ENCODE measurements at regions of chr4 and their contacts with region 1.

Region 1: DNA sequence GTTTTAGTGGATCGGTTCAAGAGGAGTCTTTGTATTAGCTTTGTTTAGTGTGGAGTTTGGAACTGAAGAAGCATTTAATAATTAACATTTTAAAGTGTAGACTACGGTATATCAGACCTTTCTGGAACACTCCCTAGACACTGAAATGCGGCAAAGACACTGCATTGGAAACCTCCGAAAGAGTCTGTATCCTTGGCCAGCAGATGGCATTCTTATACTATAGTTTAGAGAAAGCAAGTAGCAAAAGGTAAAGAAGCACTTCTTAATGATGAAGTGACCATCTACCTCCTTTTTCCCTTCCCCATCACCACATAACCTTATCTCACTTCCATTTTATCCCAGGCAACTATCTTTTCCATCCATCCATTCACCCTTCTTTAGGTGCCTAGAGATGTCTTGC is 7.6 kb downstream of the FABP2 start:
- DNase-seq: peak; percentile 57
- H3K4me3 ChIP-seq: no peak overlapping the region
- H3K27ac ChIP-seq: no peak overlapping the region
- H3K4me1 ChIP-seq: no peaks in the 10 kb centered on the region
- CTCF ChIP-seq: peak; percentile 78

Region 2: GRCh38 chr4:119010909-119011606 is 303.3 kb before region 1 on chr4:
- CTCF ChIA-PET with region 1: no interaction called
- POLR2A ChIA-PET with region 1: no interaction called
- intact Hi-C with region 1: no loop called
- DNase-seq: no peak
- H3K4me3 ChIP-seq: no peak overlapping the region
- H3K27ac ChIP-seq: no peak overlapping the region
- H3K4me1 ChIP-seq: no peaks in the 10 kb centered on the region
- CTCF ChIP-seq: no peak

Region 3: GRCh38 chr4:119490335-119490734 is 176.0 kb after region 1 on chr4:
- CTCF ChIA-PET with region 1: no interaction called
- POLR2A ChIA-PET with region 1: no interaction called
- intact Hi-C with region 1: loop called (anchors 5 kb)
- DNase-seq: peak; percentile 32
- H3K4me3 ChIP-seq: no peak overlapping the region
- H3K27ac ChIP-seq: no peak overlapping the region
- H3K4me1 ChIP-seq: no peaks in the 10 kb centered on the region
- CTCF ChIP-seq: peak; percentile 58

Region 4: DNA sequence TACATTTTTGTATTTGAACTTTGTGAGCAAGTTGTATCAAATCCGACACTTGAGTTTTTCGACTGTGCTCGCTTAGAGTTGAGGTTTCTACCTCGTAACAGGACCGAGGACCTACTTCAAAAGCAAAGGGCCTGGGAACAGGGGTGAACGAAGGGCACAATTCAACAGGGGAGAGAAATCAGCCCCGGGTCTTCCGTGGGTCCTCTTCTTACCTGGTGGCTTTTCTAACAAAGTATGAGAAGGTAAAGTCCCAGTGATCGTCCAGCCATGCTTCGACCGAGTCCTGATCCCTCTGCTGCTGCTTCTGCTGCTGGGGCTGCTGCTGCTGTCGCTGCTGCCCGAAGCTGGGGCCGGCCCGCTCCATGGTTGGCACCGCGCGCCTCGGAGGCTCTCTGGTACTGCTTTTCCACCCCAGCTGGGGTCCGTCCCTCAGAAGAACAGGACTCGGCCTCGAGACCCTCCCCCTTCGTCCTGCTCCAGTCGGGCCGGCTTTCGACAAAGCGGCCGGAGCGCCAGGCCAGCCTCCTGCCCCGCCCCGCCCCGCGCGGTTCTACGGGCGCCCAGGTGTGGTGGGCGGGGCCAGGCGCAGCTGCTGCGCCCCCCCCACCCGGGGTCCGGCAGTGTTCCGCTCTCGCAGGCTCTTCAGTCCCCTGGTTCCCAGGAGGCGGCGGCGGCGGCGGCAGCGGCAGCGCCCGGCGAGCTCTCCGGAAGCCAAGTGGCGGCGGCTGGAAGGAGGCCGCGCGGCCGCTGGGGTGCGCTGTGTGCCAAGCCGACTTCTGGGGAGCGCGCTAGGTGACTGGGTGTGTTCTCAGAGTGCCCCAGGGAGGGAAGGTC is 314.2 kb after region 1 on chr4 and contains the start of gene PDE5A:
- CTCF ChIA-PET with region 1: no interaction called
- POLR2A ChIA-PET with region 1: no interaction called
- intact Hi-C with region 1: loop called (anchors 2 kb)
- DNase-seq: peak; percentile 68
- H3K4me3 ChIP-seq: peak within 1 kb of the TSS; percentile 62
- H3K27ac ChIP-seq: no peak within 1 kb of the TSS
- H3K4me1 ChIP-seq: peaks cover 13% of the 10 kb centered on the region
- CTCF ChIP-seq: peak; percentile 70
- total RNA-seq, gene PDE5A: 0.22 and 1.5 TPM in 2 replicates

Region 5: GRCh38 chr4:119785963-119786362 is 471.6 kb after region 1 on chr4:
- CTCF ChIA-PET with region 1: no interaction called
- POLR2A ChIA-PET with region 1: no interaction called
- intact Hi-C with region 1: loop called (anchors 10 kb)
- DNase-seq: no peak
- H3K4me3 ChIP-seq: no peak overlapping the region
- H3K27ac ChIP-seq: no peak overlapping the region
- H3K4me1 ChIP-seq: no peaks in the 10 kb centered on the region
- CTCF ChIP-seq: peak; percentile 57

Region 6: DNA sequence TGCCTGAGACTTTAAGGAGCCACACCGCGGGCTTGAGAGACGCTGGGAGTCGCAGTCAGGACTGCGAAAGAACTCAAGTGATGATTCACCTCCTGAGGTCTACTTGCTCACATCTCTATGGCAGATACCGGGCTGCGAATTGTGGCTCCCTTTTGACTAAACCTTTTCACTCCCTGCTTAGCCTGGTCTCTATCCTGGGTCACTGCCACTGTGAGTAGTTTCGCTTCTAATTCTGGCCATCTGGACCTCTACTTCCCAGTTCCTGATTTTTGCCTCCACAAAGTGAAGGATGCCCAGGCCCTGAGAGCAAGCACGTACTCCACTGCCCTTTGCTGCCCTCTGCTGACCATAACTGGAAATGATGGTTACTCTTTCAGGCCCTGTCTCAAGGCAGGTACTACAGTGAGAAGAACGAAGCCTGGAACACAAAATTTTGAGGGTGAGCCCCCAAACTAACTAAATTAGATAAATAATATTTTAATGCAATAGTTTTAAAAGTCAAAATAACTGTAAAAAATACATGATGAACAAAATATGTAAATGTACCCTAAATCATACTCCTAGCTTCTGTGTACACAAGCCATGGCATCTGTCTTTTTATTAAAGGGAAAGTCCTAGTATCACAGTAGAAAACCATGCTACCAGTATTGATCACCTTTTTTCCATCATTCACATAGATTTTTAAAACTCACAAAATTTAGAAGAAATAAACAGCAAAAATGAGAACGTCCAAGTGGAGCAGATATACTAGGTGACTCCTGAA is 735.6 kb after region 1 on chr4:
- CTCF ChIA-PET with region 1: no interaction called
- POLR2A ChIA-PET with region 1: no interaction called
- intact Hi-C with region 1: loop called (anchors 2 kb)
- DNase-seq: peak; percentile 73
- H3K4me3 ChIP-seq: no peak overlapping the region
- H3K27ac ChIP-seq: no peak overlapping the region
- H3K4me1 ChIP-seq: peaks cover 13% of the 10 kb centered on the region
- CTCF ChIP-seq: peak; percentile 92